IMR-90 (cell line): ENCODE measurements at regions of chr7 and their contacts with region 1.

Region 1: GRCh38 chr7:120941064-120941463 is 9.5 kb upstream of the ING3 start:
- DNase-seq: no peak
- ATAC-seq: peak; percentile 57; the same call in 1 of the 2 replicates
- H3K4me3 ChIP-seq: no peak overlapping the region
- H3K27ac ChIP-seq: no peak overlapping the region
- H3K4me1 ChIP-seq: no peaks in the 10 kb centered on the region
- H3K27me3 ChIP-seq: no peaks in the 10 kb centered on the region
- CTCF ChIP-seq: peak; percentile 40
- POLR2A ChIP-seq: no peak
- RAD21 ChIP-seq: peak; percentile 32; the same call in 1 of the 2 replicates

Region 2: GRCh38 chr7:120857588-120858573 is 83.2 kb before region 1 on chr7 and contains the start of gene TSPAN12:
- CTCF ChIA-PET with region 1: no interaction called
- POLR2A ChIA-PET with region 1: no interaction called
- dilution Hi-C with region 1: no loop called
- in situ Hi-C with region 1: no loop called
- intact Hi-C with region 1: loop called (anchors 5 kb)
- DNase-seq: peak; percentile 54
- ATAC-seq: peak; percentile 96
- H3K4me3 ChIP-seq: peak within 1 kb of the TSS; percentile 78
- H3K27ac ChIP-seq: peak within 1 kb of the TSS; percentile 79
- H3K4me1 ChIP-seq: no peaks in the 10 kb centered on the region
- H3K27me3 ChIP-seq: peaks cover 1% of the 10 kb centered on the region
- CTCF ChIP-seq: peak; percentile 65
- POLR2A ChIP-seq: no peak
- RAD21 ChIP-seq: peak; percentile 35
- total RNA-seq, gene TSPAN12: 0.72 and 1.1 TPM in 2 replicates

Region 3: GRCh38 chr7:120973849-120974248 is 32.8 kb after region 1 on chr7:
- CTCF ChIA-PET with region 1: no interaction called
- POLR2A ChIA-PET with region 1: no interaction called
- dilution Hi-C with region 1: no loop called
- in situ Hi-C with region 1: no loop called
- intact Hi-C with region 1: no loop called
- DNase-seq: no peak
- ATAC-seq: no peak
- H3K4me3 ChIP-seq: no peak overlapping the region
- H3K27ac ChIP-seq: no peak overlapping the region
- H3K4me1 ChIP-seq: no peaks in the 10 kb centered on the region
- H3K27me3 ChIP-seq: no peaks in the 10 kb centered on the region
- CTCF ChIP-seq: no peak
- POLR2A ChIP-seq: no peak
- RAD21 ChIP-seq: no peak